ENCODE measurements at regions of chr2 and their contacts with region 1.

Region 1: DNA sequence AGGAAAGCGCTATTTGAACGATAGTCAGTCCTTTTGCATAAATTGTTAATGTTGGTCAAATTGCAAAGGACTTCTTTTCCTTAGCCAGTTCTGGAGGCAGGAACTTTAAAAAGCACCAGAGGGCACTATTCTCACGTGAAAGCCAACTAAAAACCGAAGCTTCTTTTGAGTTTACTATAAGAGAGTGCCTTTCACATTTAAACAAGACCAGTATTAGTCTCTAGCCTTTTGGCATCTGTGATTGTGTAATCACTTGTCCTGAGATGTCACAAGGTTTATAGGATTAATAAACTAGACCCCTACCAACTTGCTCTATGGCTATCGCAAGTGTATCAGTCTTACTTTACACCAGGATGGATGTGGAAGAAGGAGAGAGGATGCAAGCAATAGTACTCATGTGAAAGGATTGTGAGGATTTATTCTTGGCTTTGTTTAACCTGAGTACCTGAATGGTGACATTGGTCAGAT is 14.4 kb upstream of the STAT4 start:
- DNase-seq: no peak
- ATAC-seq: peak; percentile 76

Region 2: DNA sequence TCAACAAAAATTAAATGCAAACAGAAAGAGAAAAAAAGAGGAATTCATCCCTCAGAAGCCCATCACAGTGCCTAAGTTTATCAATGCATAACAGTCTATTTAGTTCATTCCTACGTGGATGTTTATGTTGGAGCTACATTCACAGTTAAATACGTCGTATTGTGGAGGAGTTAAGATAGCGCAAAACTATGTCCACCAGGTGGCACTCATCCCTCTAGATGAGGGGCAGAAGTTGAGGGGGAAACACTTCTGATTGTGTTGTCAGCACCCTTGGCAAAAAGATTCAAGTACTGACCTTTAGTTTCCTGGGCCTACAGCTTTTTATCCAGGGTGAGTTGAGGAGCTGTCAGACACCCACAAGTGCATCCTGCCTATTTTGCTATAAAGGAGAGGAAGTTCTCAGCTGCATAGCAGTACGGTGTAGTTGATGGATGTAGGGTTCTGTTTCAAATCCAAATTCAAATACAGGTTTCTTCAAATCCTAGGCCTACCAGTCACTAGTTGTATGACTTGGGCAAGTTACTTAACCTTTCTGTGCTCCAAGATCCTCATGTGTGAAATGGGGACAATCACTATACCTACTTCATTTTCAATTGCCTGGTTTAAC is 53.2 kb after region 1 on chr2:
- intact Hi-C with region 1: loop called (anchors 10 kb)
- DNase-seq: no peak
- ATAC-seq: peak; percentile 68

Region 3: DNA sequence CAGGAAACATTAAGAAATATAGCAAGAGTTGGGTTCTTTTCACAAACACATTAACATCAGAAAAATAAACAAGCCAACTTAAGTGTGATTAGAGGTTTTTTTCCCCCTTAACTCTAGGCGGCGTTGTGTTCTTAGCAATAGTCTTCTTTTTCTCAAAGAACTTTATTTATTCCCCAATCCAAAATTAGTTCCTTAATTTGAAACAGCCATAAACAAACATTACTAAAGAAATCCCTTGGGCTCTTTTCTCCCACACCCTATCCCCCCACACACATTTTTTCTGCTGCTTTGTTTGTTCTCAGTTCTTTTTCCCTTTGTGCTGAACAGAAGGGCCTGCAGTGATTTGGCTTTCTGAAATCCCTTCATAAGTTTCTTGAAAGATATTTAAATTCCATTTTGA is 66.8 kb after region 1 on chr2:
- intact Hi-C with region 1: loop called (anchors 5 kb)
- DNase-seq: no peak
- ATAC-seq: no peak

Region 4: DNA sequence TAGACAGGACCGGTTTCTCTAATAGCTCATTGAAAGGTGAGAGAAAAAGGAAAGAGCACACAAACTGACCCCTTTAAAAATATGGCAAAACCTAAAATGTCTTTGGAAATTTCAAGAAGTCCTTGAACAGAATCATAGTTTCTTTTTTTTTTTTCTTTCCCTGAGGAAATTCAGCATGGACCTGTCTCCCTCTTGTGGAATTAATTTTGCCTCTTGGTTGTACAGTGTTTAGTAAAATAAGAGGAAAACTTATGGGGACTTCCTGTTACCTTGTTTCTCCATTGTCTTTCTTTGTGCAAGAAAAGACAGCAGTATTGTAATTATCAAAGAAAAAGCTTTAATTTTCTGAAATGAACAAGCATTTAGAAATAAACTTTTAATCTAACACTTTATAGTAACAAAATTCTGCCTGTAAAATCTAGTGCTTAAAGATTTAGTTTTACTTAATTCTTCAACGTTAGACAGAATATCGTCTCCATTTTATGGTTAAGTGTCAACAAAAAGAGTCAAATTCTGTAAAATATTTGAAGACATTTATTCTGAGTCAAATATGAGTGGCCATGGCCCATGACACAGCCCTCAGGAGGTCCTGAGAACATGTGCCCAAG is 336.5 kb after region 1 on chr2:
- intact Hi-C with region 1: loop called (anchors 5 kb)
- DNase-seq: no peak
- ATAC-seq: peak; percentile 58

Region 5: GRCh38 chr2:191521608-191522208 is 356.5 kb after region 1 on chr2:
- intact Hi-C with region 1: loop called (anchors 1 kb)
- DNase-seq: no peak
- ATAC-seq: no peak